CD14-positive monocyte (primary cell): ENCODE measurements at regions of chr1 and their contacts with region 1.

Region 1: DNA sequence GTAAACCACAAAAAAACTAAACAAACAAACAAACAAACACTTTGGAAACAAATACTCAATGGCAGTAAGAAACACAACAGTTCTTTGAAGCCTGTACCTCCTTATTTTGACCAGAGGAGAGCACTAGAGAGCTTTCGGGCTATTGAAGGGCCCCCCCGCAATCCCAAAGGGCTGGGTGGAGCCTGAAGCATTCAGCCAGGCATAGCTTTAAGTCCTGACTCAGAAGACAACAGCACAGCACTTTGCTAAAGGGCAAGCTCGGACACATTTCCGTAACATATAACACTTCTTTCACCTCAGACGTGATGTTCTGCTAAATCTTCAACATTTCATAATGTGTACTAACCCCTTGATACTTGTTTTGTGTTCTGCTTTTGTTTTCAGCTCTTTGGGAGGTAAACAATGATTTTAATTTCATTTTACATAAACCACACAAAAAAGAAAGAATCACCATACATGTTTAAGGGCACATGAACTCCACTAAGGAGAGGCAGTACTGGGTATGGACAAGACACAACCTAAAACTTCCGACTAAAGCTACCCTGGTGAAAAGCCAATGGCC is 9.7 kb upstream of the SHCBP1L start:
- DNase-seq: peak; percentile 40 to 47 (median 45)
- H3K4me3 ChIP-seq: no peak overlapping the region
- H3K4me3 Mint-ChIP-seq: peak overlapping the region in 1 of 2 donors; percentile 69
- H3K27ac ChIP-seq: no peak overlapping the region
- H3K27ac Mint-ChIP-seq: peak overlapping the region in 1 of 7 donors; percentile 2
- H3K4me1 ChIP-seq: peaks cover 0 to 5% of the 10 kb centered on the region in 2 donors
- H3K4me1 Mint-ChIP-seq: peaks cover 6% of the 10 kb centered on the region
- H3K27me3 ChIP-seq: no peaks in the 10 kb centered on the region
- H3K27me3 Mint-ChIP-seq: peaks cover 1 to 3% (median 3%) of the 10 kb centered on the region in 3 donors
- CTCF ChIP-seq: peak; percentile 73

Region 2: GRCh38 chr1:183234660-183235476 is 272.2 kb after region 1 on chr1:
- intact Hi-C with region 1: loop called in 1 of 2 experiments (anchors 10 kb)
- DNase-seq: peak in 1 of 3 donors; percentile 10
- H3K4me3 ChIP-seq: no peak overlapping the region
- H3K4me3 Mint-ChIP-seq: peak overlapping the region in 1 of 2 donors; percentile 64
- H3K27ac ChIP-seq: no peak overlapping the region
- H3K27ac Mint-ChIP-seq: peak overlapping the region in 1 of 7 donors; percentile 60
- H3K4me1 ChIP-seq: no peaks in the 10 kb centered on the region
- H3K4me1 Mint-ChIP-seq: peaks cover 9% of the 10 kb centered on the region
- H3K27me3 ChIP-seq: no peaks in the 10 kb centered on the region
- H3K27me3 Mint-ChIP-seq: peaks cover 4 to 8% (median 8%) of the 10 kb centered on the region in 3 donors
- CTCF ChIP-seq: peak; percentile 58